Activated naive CD8-positive, alpha-beta T cell treated with anti-CD3 and anti-CD28 coated beads, Interleukin-2, amount 10 ng/mL, durations not matched to agents 7 days and 5 days (primary cell): ENCODE measurements at regions of chr16 and their contacts with region 1.

Region 1: DNA sequence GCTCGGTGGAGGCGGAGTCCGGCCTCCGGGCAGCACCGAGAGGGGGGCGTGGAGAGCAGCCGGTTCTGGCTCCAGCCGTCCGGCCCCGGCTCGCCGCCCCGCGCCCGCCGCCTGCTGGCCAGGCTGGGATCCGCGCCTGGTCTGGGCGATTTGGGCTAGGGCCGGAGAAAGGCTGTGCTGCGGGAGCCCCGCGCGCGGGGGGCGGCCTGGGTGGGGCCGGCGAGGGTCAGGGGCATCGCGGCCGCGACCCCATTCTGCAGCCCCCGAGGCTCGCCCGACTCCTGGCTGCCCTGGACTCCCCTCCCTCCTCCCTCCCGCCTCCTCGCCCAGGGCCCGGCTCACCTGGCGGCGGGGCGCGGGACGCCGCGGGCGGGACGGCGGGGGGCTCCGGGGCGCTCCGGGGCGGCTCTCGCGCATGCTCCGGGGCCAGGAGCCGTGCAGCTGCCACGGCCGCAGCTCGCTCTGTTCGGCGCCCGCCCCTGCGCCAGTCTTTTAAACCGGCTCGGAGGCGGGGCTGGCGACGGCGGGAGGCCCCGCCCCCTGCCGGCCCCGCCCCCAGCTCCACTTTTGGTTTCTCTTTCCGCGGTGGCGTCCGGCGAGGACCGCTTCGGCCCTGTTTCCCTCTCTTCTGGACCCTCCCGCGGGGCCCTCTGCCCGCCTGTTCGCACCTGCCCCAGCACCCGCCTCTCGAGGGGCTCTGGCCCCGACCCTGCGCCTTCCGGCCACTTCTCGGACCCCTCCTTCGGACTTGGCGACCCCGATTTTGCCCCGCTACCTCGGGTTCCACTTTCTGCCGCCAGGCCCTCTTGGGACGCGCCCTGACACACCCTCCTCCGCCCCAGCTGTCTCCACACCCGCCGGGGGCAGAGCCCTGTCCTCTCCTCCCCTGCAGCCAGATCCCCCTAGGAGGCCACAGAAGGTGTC is at the start of gene SOCS1:
- DNase-seq: peak; percentile 98
- ATAC-seq: peak; percentile 68
- H3K4me3 Mint-ChIP-seq: peak within 1 kb of the TSS; percentile 98
- H3K27ac Mint-ChIP-seq: peak within 1 kb of the TSS; percentile 98
- H3K4me1 Mint-ChIP-seq: peaks cover 47% of the 10 kb centered on the region
- H3K27me3 Mint-ChIP-seq: no peaks in the 10 kb centered on the region
- total RNA-seq, gene SOCS1: 165 to 176 TPM

Region 2: DNA sequence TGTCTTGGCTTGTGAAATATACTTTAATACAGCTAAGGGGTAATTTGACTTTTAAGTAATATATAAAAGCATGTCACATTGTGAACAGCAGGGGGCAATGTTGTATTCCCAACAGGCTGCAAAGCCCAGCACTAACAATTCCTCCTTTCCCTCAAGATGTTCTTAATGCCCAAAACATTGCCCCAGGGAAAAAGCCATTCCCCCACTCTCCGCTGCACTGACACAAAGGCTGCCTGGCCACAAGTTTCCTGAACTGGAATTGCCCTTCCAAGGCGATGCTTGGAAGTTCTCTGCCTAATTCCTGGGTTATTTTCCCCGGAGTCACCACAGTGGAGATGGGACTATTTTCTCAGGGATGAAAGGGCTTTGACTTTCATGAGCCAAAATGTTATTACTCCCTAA is 284.4 kb before region 1 on chr16:
- POLR2A ChIA-PET with region 1: interaction called, 122 read pairs
- DNase-seq: no peak
- ATAC-seq: no peak
- H3K4me3 Mint-ChIP-seq: peak overlapping the region; percentile 12
- H3K27ac Mint-ChIP-seq: no peak overlapping the region
- H3K4me1 Mint-ChIP-seq: peaks cover 58% of the 10 kb centered on the region
- H3K27me3 Mint-ChIP-seq: no peaks in the 10 kb centered on the region

Region 3: GRCh38 chr16:11076259-11077018 is 179.6 kb before region 1 on chr16:
- POLR2A ChIA-PET with region 1: interaction called, 20 read pairs
- DNase-seq: peak; percentile 66
- ATAC-seq: peak; percentile 96
- H3K4me3 Mint-ChIP-seq: peak overlapping the region; percentile 64
- H3K27ac Mint-ChIP-seq: peak overlapping the region; percentile 91
- H3K4me1 Mint-ChIP-seq: peaks cover 80% of the 10 kb centered on the region
- H3K27me3 Mint-ChIP-seq: no peaks in the 10 kb centered on the region

Region 4: DNA sequence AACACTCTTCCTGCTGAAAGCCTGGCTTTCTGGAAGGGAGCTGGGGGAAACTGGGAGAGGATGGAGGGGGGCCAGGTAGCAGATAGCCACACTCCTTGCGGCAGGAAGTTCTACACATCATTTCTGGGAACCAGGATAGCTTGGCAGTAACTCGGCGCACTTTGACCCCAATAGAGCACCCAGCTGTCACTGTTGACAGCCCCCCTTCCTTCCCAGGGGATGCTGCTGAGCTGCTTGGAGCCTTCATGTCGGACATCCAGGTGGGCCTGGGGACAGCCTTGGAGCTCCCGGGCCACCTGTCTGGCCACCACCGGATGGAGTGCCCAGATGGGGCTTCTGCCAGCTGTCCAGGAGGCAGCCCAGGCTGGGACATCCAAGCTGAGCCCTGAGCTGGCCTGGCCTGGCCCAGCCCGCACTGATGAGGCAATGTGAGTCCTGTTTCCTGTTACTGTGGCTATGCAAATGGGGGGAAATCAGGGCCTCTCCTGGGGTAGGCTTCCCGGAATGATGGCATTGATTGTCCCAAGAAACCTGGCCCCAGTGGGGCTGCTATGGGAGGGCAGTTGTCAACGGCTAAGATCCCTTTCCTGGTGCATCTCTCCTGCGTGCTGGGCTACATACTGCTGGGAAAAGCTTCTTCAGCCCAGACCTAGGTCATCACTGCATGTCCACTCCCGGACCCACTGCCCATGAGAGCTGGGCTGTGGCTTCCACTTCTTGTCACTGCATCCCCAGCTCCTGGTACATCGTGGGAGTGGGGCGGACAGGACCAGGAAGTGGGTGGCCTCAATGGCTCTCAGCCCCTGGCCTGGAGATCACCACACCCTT is 50.0 kb before region 1 on chr16:
- POLR2A ChIA-PET with region 1: interaction called, 11 read pairs
- DNase-seq: no peak
- ATAC-seq: no peak
- H3K4me3 Mint-ChIP-seq: peak overlapping the region; percentile 53
- H3K27ac Mint-ChIP-seq: peak overlapping the region; percentile 95
- H3K4me1 Mint-ChIP-seq: peaks cover 31% of the 10 kb centered on the region
- H3K27me3 Mint-ChIP-seq: no peaks in the 10 kb centered on the region

Region 5: GRCh38 chr16:11312718-11313492 is 56.9 kb after region 1 on chr16:
- POLR2A ChIA-PET with region 1: interaction called, 96 read pairs
- DNase-seq: no peak
- ATAC-seq: peak; percentile 30
- H3K4me3 Mint-ChIP-seq: peak overlapping the region; percentile 58
- H3K27ac Mint-ChIP-seq: peak overlapping the region; percentile 75
- H3K4me1 Mint-ChIP-seq: peaks cover 68% of the 10 kb centered on the region
- H3K27me3 Mint-ChIP-seq: no peaks in the 10 kb centered on the region

Region 6: DNA sequence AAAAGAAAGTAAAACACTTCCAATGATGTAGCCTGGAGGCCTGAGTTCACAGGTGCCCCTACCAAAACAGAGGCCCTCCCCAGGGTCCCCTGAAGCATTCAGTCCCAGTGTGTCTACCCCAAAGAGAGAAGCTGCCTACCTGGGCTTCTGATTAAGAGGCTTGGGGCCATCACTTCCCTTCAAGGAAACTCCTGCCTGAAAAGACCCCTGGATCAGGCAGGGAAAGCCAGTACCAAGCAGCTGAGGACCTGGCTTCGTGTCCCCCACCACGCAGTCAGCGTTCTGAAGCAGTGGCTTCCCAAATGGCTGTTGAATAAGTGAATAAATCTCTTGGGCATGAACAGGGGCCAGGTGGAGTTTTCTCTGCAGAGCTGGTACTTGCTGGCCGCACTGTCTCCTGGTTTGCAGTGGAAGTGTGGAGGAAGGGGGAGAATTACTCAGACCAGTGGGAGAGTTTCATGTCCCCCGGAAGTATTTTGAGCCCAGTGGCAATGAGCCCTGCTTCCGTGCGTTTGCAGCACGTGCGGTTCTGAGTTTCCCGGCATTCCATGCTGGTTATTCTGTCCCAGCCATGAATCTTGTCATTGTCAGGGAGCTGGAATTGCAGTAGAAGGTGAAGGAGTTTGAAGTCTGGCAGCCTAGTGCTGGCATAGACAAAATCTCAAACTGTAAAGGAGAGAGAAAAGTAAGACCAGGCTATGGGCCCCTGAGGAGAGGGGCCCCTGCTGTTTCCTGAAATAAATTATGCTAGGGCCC is 116.3 kb after region 1 on chr16:
- POLR2A ChIA-PET with region 1: interaction called, 16 read pairs
- DNase-seq: no peak
- ATAC-seq: no peak
- H3K4me3 Mint-ChIP-seq: no peak overlapping the region
- H3K27ac Mint-ChIP-seq: no peak overlapping the region
- H3K4me1 Mint-ChIP-seq: peaks cover 11% of the 10 kb centered on the region
- H3K27me3 Mint-ChIP-seq: no peaks in the 10 kb centered on the region